B cell (primary cell): ENCODE measurements at regions of chr20 and their contacts with region 1.

Region 1: DNA sequence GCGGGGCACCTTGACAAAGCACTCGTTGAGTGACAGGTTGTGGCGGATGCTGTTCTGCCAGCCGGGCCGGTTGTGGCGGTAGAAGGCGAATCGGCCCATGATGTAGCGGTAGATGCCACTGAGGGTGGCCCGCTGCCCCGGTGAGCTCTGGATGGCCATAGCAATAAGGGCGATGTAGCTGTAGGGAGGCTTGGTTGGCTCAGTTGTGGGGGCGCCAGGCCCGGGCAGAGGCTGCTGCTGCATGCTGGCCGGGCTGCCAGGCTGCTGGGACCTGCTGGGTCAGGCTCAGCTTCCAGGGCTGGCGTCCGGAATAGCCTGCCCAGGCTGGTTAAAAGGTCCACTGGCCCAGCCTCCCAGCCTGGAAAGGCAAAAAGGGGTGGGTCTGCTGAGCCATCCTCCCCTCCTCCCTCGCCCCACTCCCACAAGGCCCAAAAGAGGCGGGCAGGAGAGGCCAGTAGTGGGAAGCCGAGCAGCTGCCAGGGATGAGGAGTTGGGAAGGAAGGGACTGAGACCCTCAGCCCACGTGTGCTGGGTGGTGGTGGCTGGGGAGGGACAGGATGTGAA is at the start of gene FOXS1:
- DNase-seq: no peak
- ATAC-seq: no peak
- H3K4me3 ChIP-seq: no peak within 1 kb of the TSS
- H3K4me3 Mint-ChIP-seq: no peak within 1 kb of the TSS
- H3K27ac ChIP-seq: no peak within 1 kb of the TSS
- H3K27ac Mint-ChIP-seq: no peak within 1 kb of the TSS
- H3K4me1 ChIP-seq: peaks cover 0 to 6% of the 10 kb centered on the region in 2 donors
- H3K4me1 Mint-ChIP-seq: peaks cover 8% of the 10 kb centered on the region
- H3K27me3 ChIP-seq: peaks cover 0 to 3% (median 0%) of the 10 kb centered on the region in 4 experiments
- H3K27me3 Mint-ChIP-seq: peaks cover 13% of the 10 kb centered on the region
- CTCF ChIP-seq: no peak
- total RNA-seq, gene FOXS1: not detected in 2 replicates

Region 2: DNA sequence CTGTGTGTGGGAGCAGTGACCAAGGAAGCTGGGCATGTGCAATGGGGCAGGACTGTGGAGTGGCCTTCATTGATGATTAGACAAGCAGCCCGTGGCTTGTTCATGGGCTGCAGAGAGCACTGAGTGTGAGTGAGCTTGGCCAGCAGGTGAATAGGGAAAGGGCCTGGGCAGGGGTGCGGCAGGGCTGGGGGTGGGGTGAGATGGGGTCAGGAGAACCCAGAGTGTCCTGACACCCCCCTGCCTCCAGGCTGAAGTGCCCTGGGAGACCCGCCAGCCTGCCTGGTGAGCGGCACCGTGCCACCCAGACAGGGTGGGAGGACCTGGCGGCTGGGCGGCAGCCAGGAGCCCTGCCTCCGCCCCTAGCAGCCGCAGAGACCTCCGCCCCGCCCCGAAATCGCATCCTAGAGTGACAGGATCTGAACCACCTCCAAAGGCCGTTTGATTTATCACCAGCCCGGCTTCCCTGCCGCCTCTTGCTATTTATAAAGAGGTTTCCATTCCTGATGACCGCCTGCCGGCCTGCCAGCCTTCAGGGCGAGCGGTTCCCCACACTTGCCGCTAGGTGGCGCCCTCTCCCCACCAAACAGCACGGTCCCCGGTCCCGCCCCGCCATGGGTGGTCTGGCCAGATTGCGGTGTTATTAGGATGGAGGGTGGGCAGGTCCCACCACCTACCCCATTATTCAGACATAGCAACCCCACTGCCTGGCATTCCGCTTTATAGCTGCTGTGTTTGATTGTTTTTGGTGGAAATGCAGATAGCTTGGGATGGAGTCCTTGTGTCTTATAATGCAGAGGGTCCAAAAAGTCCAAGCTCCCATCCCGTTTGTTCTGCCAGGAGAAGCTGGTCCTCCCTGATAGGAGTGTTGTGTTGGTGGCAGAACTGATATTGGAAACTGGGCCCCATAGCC is 22.7 kb before region 1 on chr20:
- CTCF ChIA-PET with region 1: interaction called, 31 read pairs
- POLR2A ChIA-PET with region 1: no interaction called
- intact Hi-C with region 1: loop called (anchors 1 kb)
- DNase-seq: peak; percentile 82
- ATAC-seq: peak; percentile 93
- H3K4me3 ChIP-seq: no peak overlapping the region
- H3K4me3 Mint-ChIP-seq: peak overlapping the region; percentile 27
- H3K27ac ChIP-seq: no peak overlapping the region
- H3K27ac Mint-ChIP-seq: no peak overlapping the region
- H3K4me1 ChIP-seq: peaks cover 6 to 8% of the 10 kb centered on the region in 2 donors
- H3K4me1 Mint-ChIP-seq: peaks cover 8% of the 10 kb centered on the region
- H3K27me3 ChIP-seq: peaks cover 0 to 9% (median 0%) of the 10 kb centered on the region in 4 experiments
- H3K27me3 Mint-ChIP-seq: peaks cover 8% of the 10 kb centered on the region
- CTCF ChIP-seq: peak; percentile 99

Region 3: DNA sequence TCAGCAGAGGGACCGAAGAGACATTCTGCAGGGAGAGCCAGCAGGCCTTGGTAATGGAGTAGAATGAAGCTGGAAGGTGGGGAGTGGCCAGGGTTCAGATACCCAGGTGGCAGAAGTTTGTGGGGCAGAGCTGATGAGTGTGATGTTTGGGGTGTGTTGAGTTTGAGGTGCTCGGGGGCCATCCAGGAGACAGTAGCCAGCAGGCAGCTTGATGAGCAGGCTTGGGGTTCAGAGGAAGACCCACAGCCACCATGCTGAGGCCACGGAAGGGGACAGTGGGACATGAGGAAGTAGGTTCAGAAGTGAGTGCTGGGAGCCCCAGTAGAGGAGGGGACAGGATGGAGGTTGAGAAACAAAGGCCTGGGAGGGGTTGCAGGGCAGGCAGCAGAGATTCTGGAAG is 11.1 kb after region 1 on chr20:
- CTCF ChIA-PET with region 1: interaction called, 12 read pairs
- POLR2A ChIA-PET with region 1: no interaction called
- intact Hi-C with region 1: no loop called
- DNase-seq: no peak
- ATAC-seq: no peak
- H3K4me3 ChIP-seq: no peak overlapping the region
- H3K4me3 Mint-ChIP-seq: no peak overlapping the region
- H3K27ac ChIP-seq: no peak overlapping the region
- H3K27ac Mint-ChIP-seq: no peak overlapping the region
- H3K4me1 ChIP-seq: peaks cover 19 to 23% of the 10 kb centered on the region in 2 donors
- H3K4me1 Mint-ChIP-seq: peaks cover 20% of the 10 kb centered on the region
- H3K27me3 ChIP-seq: peaks cover 0 to 31% (median 10%) of the 10 kb centered on the region in 4 experiments
- H3K27me3 Mint-ChIP-seq: peaks cover 6% of the 10 kb centered on the region
- CTCF ChIP-seq: no peak